Common myeloid progenitor, CD34-positive (primary cell): ENCODE measurements at regions of chr3 and their contacts with region 1.

Region 1: GRCh38 chr3:10273702-10274305 is 18.9 kb downstream of the GHRL start:
- DNase-seq: peak in 2 of 3 donors; percentile 47 to 53
- H3K4me3 ChIP-seq: peak overlapping the region in 3 of 7 experiments; percentile 7 to 15 (median 14)
- H3K27ac ChIP-seq: peak overlapping the region; percentile 2 to 57
- H3K4me1 ChIP-seq: peaks cover 13 to 21% (median 19%) of the 10 kb centered on the region in 4 experiments
- H3K27me3 ChIP-seq: no peaks in the 10 kb centered on the region

Region 2: DNA sequence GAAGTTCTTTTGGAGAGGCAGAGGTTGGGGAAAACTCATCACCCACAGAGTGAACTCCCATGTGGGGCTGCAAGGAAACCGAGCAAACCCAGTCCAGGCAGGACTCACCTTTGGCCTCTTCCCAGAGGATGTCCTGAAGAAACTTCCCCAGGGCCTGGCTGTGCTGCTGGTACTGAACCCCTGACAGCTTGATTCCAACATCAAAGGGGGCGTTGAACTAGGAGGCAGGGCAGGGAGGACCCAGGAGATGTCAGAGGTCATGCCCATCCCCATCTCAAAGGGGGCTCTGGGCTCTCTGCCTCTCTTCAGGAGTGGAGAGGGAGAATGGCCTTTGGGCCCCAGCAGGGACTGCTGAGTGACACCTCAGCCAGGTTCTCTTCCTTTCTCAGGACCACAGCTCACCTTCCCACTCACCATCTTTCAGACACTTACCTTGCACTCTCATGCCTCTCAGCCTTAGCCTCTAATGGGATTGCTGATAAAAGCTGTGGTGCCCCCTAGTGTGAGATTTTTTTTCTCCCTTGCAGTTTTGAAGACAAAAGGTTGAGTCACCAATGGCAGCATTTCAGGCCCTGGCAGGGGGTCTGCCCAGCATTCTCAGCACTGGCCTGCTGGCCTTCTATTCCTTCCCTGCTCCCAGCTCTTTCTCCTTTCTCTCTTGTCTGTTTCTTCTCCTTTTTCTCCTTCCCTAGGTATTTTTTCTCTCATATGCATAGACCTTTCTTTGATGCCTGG is 13.0 kb after region 1 on chr3:
- CTCF ChIA-PET with region 1: interaction called, 27 read pairs
- POLR2A ChIA-PET with region 1: interaction called, 6 read pairs
- DNase-seq: peak in 2 of 3 donors; percentile 69 to 85
- H3K4me3 ChIP-seq: no peak overlapping the region
- H3K27ac ChIP-seq: no peak overlapping the region
- H3K4me1 ChIP-seq: peaks cover 0 to 36% (median 17%) of the 10 kb centered on the region in 4 experiments
- H3K27me3 ChIP-seq: no peaks in the 10 kb centered on the region

Region 3: DNA sequence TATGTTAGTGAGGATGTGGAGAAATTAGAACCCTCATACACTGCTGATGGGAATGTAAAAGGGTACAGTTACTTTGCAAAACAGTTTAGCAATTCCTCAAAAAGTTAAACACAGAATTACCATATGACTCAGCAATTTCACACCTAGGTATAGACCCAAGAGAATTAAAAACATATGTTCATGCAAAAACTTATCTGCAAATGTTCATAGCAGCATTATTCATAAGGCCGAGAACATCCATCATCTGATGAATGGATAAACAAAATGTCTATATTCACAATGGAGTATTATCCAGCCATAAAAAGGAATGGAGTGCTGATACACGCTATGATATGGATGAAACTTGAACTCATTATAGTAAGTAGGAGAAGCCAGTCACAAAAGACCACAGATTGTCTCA is 36.8 kb after region 1 on chr3:
- CTCF ChIA-PET with region 1: no interaction called
- POLR2A ChIA-PET with region 1: no interaction called
- DNase-seq: no peak
- H3K4me3 ChIP-seq: no peak overlapping the region
- H3K27ac ChIP-seq: no peak overlapping the region
- H3K4me1 ChIP-seq: no peaks in the 10 kb centered on the region
- H3K27me3 ChIP-seq: no peaks in the 10 kb centered on the region

Region 4: DNA sequence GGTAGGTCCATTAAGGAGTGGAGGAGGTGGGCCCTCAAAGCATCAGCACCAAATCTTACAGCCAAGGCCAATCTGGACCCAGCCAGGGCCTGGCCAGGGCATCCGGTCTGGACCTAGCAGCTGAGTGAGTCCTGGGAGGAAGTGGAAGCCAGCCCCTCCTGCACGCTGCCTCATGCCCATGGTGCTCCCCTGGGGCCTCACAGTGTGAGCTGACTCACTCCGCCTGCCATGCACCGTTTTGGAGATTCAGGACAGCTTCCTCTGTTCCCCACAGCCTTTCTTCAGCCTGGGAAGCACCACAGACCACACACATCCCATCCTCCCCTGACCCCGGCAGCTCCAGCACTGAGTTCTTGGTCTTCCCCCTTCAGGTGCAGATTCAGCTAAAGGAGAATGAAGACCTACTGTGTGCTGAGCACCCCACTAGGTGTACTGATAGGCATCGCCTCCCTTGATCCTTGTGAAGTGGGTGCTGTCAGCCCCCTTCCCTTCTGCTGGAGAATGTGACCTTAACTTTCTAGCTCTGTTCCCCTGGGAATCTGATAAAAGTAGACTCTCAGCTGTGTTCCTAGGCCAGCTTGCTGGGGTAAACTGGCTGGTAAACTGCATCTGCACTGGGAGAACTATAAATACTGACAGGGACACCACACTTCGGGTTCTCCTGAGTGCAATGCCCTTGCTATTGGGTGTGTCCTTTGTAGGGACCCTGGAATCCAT is 83.9 kb after region 1 on chr3:
- CTCF ChIA-PET with region 1: no interaction called
- POLR2A ChIA-PET with region 1: no interaction called
- DNase-seq: peak in 2 of 3 donors; percentile 27 to 58
- H3K4me3 ChIP-seq: no peak overlapping the region
- H3K27ac ChIP-seq: no peak overlapping the region
- H3K4me1 ChIP-seq: peaks cover 6 to 19% (median 14%) of the 10 kb centered on the region in 4 experiments
- H3K27me3 ChIP-seq: no peaks in the 10 kb centered on the region